ENCODE measurements at regions of chr20 and their contacts with region 1.

Region 1: DNA sequence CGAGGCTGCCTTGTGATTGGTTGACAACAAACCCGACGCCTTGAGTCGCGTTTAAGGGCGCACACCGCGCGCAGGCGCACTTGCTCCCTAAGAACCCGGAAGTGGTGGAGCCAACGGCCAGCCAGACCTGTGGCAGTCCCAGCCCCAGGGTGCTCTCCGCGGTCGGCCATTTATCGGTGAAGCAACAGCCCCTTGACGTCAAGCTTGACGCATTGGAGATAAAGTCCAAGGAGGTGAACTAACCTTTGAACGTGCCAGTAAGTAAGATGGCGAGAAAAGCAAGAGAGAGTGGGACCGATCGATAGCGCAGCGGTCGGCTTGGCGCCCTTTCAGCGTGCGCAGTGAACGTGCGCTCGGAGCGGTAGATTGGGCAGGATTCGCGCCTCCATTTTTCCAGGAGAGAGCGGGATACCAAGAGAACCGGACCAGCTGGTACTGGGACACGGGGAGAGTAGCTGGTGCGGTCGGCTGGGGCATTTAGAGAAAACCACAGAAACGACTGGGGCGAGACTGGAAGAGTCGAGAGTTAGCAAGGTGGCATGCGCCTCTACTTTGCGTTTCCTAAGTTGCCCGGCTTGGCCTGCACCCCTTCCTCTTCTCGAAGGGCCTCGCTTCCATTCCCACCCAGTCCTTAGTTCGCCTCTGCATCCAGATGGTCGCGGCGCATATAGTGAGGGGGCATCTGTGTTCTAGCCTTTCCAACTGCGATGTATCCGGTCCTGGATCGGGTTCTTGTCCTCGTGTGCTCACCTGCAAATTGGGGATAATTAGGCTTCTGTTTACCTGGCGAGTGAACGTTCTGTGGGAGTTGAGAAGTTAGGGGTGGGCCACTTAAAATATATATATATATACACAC is at the start of gene CSTF1:
- DNase-seq: peak; percentile 100
- ATAC-seq: peak; percentile 90
- H3K4me3 ChIP-seq: peak within 1 kb of the TSS; percentile 60 to 98 (median 73)
- H3K4me3 Mint-ChIP-seq: no peak within 1 kb of the TSS
- H3K27ac ChIP-seq: peak within 1 kb of the TSS; percentile 84 to 90
- H3K27ac Mint-ChIP-seq: no peak within 1 kb of the TSS
- H3K4me1 ChIP-seq: peaks cover 16 to 21% of the 10 kb centered on the region in 2 donors
- H3K4me1 Mint-ChIP-seq: peaks cover 18% of the 10 kb centered on the region
- H3K27me3 ChIP-seq: no peaks in the 10 kb centered on the region
- H3K27me3 Mint-ChIP-seq: no peaks in the 10 kb centered on the region
- CTCF ChIP-seq: no peak
- total RNA-seq, gene CSTF1: 31.9 and 33.8 TPM in 2 replicates

Region 2: GRCh38 chr20:56358596-56359211 is 33.8 kb before region 1 on chr20 and contains the start of gene FAM210B:
- CTCF ChIA-PET with region 1: interaction called, 5 read pairs
- POLR2A ChIA-PET with region 1: interaction called, 3 read pairs
- intact Hi-C with region 1: loop called (anchors 1 kb)
- DNase-seq: peak; percentile 85
- ATAC-seq: peak; percentile 99
- H3K4me3 ChIP-seq: peak within 1 kb of the TSS; percentile 44 to 91 (median 62)
- H3K4me3 Mint-ChIP-seq: peak within 1 kb of the TSS; percentile 89
- H3K27ac ChIP-seq: no peak within 1 kb of the TSS
- H3K27ac Mint-ChIP-seq: peak within 1 kb of the TSS; percentile 37
- H3K4me1 ChIP-seq: peaks cover 0 to 15% of the 10 kb centered on the region in 2 donors
- H3K4me1 Mint-ChIP-seq: peaks cover 14% of the 10 kb centered on the region
- H3K27me3 ChIP-seq: no peaks in the 10 kb centered on the region
- H3K27me3 Mint-ChIP-seq: no peaks in the 10 kb centered on the region
- CTCF ChIP-seq: no peak
- total RNA-seq, gene FAM210B: 10.5 and 13.6 TPM in 2 replicates

Region 3: GRCh38 chr20:56422076-56422823 is 29.7 kb after region 1 on chr20:
- CTCF ChIA-PET with region 1: no interaction called
- POLR2A ChIA-PET with region 1: no interaction called
- intact Hi-C with region 1: no loop called
- DNase-seq: no peak
- ATAC-seq: no peak
- H3K4me3 ChIP-seq: no peak overlapping the region
- H3K4me3 Mint-ChIP-seq: no peak overlapping the region
- H3K27ac ChIP-seq: no peak overlapping the region
- H3K27ac Mint-ChIP-seq: no peak overlapping the region
- H3K4me1 ChIP-seq: peaks cover 0 to 5% of the 10 kb centered on the region in 2 donors
- H3K4me1 Mint-ChIP-seq: peaks cover 5% of the 10 kb centered on the region
- H3K27me3 ChIP-seq: peaks cover 0 to 13% (median 1%) of the 10 kb centered on the region in 4 experiments
- H3K27me3 Mint-ChIP-seq: peaks cover 4% of the 10 kb centered on the region
- CTCF ChIP-seq: no peak

Region 4: GRCh38 chr20:56582542-56582941 is 190.0 kb after region 1 on chr20:
- CTCF ChIA-PET with region 1: no interaction called
- POLR2A ChIA-PET with region 1: no interaction called
- intact Hi-C with region 1: no loop called
- DNase-seq: no peak
- ATAC-seq: no peak
- H3K4me3 ChIP-seq: no peak overlapping the region
- H3K4me3 Mint-ChIP-seq: no peak overlapping the region
- H3K27ac ChIP-seq: no peak overlapping the region
- H3K27ac Mint-ChIP-seq: no peak overlapping the region
- H3K4me1 ChIP-seq: no peaks in the 10 kb centered on the region
- H3K4me1 Mint-ChIP-seq: no peaks in the 10 kb centered on the region
- H3K27me3 ChIP-seq: no peaks in the 10 kb centered on the region
- H3K27me3 Mint-ChIP-seq: no peaks in the 10 kb centered on the region
- CTCF ChIP-seq: no peak

Region 5: DNA sequence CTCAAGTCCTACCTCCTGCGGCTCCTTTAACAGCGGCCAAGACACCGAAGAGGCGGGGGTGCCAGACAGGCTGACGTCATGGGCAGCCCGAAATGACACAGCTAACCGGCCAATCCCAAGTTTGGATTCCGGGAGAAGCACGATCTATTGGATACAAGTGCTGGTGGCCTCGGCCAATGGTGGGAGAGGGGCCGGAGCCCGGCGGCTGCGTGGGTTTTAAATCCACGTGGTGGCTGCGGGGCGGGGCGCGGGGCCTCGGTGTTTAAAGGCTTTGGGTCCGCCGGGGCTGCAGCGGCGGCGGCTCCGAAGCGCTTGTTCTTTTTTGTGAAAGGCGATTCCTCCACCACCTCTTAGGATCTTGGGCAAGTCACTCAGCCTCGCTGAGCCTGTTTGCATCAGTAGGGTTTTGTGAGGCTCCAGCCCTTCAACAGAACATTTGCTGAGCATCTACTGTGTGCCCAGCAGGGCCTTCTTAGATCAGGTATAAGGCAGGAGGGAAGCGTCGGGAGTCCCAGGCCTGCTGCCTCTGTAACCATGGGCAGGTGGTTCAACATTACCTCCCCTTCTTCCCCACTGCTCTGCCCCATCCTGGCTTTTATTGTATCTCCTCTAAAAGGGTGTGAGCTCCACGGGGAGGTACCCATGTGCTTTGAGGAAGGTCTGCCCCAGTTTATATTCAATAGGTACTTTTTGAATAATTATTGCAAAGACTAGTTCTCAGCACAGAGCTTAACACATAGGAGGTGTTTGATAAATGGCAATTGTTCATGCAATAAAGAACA is 1326.2 kb after region 1 on chr20:
- CTCF ChIA-PET with region 1: no interaction called
- POLR2A ChIA-PET with region 1: no interaction called
- intact Hi-C with region 1: loop called (anchors 10 kb)
- DNase-seq: peak; percentile 96
- ATAC-seq: peak; percentile 100
- H3K4me3 ChIP-seq: peak overlapping the region in 4 of 5 experiments; percentile 21 to 53 (median 42)
- H3K4me3 Mint-ChIP-seq: peak overlapping the region; percentile 77
- H3K27ac ChIP-seq: no peak overlapping the region
- H3K27ac Mint-ChIP-seq: peak overlapping the region; percentile 81
- H3K4me1 ChIP-seq: peaks cover 9 to 11% of the 10 kb centered on the region in 2 donors
- H3K4me1 Mint-ChIP-seq: peaks cover 8% of the 10 kb centered on the region
- H3K27me3 ChIP-seq: peaks cover 0 to 11% (median 0%) of the 10 kb centered on the region in 4 experiments
- H3K27me3 Mint-ChIP-seq: peaks cover 7% of the 10 kb centered on the region
- CTCF ChIP-seq: no peak

Measured in B cell (primary cell).